Activated CD4-positive, alpha-beta T cell treated with anti-CD3 and anti-CD28 coated beads, Interleukin-2, amount 10 ng/mL, durations not matched to agents 24 days and 14 days (primary cell): ENCODE measurements at regions of chr1 and their contacts with region 1.

Region 1: DNA sequence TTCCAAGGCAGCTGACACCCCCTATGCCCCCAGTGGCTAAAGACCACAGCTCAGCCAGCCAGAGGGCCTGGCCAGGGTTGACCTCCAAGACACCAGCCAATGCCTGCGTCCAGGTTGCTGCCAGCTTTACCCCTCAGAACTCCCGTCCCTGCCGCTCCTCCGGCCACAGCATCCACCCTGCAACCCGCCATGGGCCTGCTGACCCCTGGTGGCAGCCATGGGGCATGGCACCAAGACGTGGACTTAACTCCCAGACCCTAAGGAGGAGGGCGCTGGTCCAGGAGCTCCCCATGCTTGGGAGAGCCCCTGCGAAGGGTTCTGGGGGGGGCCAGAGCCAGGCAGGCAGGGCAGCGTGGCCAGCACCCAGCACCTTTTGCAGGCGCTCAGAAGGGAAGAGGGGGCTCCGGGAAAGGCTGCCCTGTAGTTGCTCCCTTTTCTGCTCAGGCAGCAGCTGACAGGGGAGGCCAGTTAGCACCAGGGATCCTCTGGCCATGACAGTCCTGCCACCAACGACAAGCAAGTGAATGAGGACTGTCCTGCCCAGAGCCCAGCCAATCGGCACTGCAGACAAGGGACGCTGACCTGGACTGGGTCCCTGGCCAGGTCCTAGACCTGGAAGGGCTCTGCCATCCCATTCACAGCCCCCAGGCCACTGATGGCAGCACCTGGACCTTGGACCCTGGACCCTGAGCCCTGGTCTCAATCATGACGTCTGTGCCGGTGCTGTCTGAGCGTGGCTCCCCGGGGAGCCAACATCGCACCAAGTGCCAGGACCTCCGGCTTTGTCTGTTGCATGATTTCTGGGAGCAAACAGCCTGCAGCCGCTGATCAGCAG is 246.2 kb downstream of the NPHP4 start:
- DNase-seq: peak; percentile 85
- H3K4me3 Mint-ChIP-seq: no peak overlapping the region
- H3K27ac Mint-ChIP-seq: no peak overlapping the region
- H3K4me1 Mint-ChIP-seq: no peaks in the 10 kb centered on the region
- H3K27me3 Mint-ChIP-seq: peaks cover 1% of the 10 kb centered on the region

Region 2: DNA sequence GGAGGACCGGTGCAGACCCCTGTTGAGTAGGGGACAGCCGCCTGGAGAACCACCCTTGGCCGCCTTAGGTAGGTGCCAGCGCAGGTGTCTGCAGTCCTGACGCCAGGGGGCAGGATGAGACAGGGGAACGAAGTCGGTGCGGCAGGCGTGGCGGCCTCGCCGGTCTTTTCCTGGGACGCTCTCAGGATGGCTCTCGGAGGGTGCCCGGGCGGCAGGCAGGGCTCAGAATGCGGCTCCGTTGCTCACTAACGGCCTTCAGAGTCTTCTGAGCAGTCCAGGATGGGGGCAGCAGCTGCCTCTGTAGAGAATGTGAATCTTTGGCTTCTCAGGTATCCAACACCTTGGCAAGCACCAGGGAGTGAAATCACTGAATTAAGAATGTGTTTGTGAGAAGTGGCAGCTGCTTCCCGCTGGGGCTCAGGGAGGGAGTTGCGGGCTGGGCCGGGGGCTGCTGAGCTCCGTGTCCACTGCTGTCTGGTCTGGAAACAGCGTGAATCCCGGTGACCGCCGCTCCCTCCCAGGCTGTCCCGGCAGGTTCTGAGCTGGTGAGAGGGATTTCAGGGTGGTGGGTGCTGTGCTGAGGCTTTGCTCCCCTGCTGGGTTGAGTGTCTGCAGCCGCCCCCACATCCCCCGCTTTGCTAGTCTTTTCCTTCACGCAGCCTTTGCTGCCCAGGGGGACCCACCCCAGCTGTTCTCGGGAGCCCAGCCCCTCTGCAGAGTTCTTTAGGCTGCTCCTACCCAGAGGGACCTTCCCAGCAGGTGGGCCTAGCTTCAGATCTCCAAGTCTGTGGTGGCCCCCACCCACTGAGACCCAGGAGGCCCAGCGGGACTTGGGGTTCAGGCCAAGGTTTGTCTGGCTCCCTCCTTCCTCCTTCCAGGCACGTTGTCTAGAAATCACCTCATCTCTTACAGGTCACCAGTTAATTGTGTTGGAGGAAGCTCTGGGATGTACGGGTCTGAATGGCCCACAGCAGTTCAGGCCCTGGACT is 1834.8 kb before region 1 on chr1:
- intact Hi-C with region 1: loop called (anchors 10 kb)
- DNase-seq: peak; percentile 92
- H3K4me3 Mint-ChIP-seq: peak overlapping the region; percentile 40
- H3K27ac Mint-ChIP-seq: no peak overlapping the region
- H3K4me1 Mint-ChIP-seq: no peaks in the 10 kb centered on the region
- H3K27me3 Mint-ChIP-seq: no peaks in the 10 kb centered on the region

Region 3: DNA sequence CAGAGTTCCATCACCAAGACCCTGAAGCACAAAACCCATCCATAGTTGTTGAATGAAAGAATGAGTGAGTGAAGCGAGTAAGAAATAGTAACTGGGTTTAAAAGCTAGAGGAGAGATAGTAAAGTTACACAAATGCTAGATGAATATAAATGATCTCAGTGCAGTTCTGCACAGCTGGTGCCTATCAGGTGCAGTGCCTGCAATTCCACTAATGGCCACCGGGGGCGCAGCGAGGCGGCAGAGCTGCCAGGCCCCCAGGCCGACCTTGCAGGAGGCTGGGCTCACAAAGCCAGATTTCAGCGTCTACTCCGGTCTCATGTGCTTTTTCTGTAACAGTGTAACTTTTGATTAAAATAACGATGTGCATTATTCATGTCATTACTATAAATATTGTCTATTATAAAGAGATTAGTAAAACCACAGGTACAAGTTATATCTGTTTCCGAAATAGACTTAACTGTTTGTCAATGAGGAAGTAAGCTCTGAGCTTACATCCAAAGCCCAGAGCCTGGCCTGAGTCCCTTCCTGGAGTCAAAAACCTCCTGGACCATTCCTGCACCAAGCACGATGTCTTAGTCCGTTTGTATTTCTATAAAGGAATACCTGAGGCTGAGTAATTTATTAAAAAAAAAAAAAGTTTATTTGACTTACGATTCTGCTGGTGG is 231.3 kb before region 1 on chr1:
- intact Hi-C with region 1: loop called (anchors 5 kb)
- DNase-seq: peak; percentile 91
- H3K4me3 Mint-ChIP-seq: no peak overlapping the region
- H3K27ac Mint-ChIP-seq: no peak overlapping the region
- H3K4me1 Mint-ChIP-seq: no peaks in the 10 kb centered on the region
- H3K27me3 Mint-ChIP-seq: peaks cover 4% of the 10 kb centered on the region

Region 4: GRCh38 chr1:5779598-5780323 is 33.8 kb after region 1 on chr1:
- intact Hi-C with region 1: no loop called
- DNase-seq: no peak
- H3K4me3 Mint-ChIP-seq: no peak overlapping the region
- H3K27ac Mint-ChIP-seq: no peak overlapping the region
- H3K4me1 Mint-ChIP-seq: no peaks in the 10 kb centered on the region
- H3K27me3 Mint-ChIP-seq: no peaks in the 10 kb centered on the region

Region 5: GRCh38 chr1:6099787-6100765 is 354.1 kb after region 1 on chr1:
- intact Hi-C with region 1: no loop called
- DNase-seq: no peak
- H3K4me3 Mint-ChIP-seq: no peak overlapping the region
- H3K27ac Mint-ChIP-seq: no peak overlapping the region
- H3K4me1 Mint-ChIP-seq: no peaks in the 10 kb centered on the region
- H3K27me3 Mint-ChIP-seq: no peaks in the 10 kb centered on the region